ENCODE measurements at regions of chr6 and their contacts with region 1.

Region 1: GRCh38 chr6:77457720-77458349 is 5.5 kb downstream of the HTR1B start:
- DNase-seq: peak in 4 of 5 donors; percentile 59 to 71 (median 64)
- ATAC-seq: peak; percentile 61 to 91 (median 88)
- H3K4me3 ChIP-seq: no peak overlapping the region
- H3K27ac ChIP-seq: peak overlapping the region in 7 of 12 donors; percentile 7 to 68 (median 40)
- H3K4me1 ChIP-seq: peaks cover 0 to 5% (median 0%) of the 10 kb centered on the region in 12 donors
- H3K27me3 ChIP-seq: peaks cover 0 to 26% (median 12%) of the 10 kb centered on the region in 9 donors
- CTCF ChIP-seq: peak; percentile 54 to 84 (median 67)
- POLR2A ChIP-seq: no peak

Region 2: GRCh38 chr6:76682842-76683241 is 775.0 kb before region 1 on chr6:
- intact Hi-C with region 1: loop called in 9 of 10 experiments (anchors 5 to 10 kb)
- DNase-seq: no peak
- ATAC-seq: no peak
- H3K4me3 ChIP-seq: no peak overlapping the region
- H3K27ac ChIP-seq: no peak overlapping the region
- H3K4me1 ChIP-seq: no peaks in the 10 kb centered on the region
- H3K27me3 ChIP-seq: no peaks in the 10 kb centered on the region
- CTCF ChIP-seq: peak in 11 of 12 donors; percentile 23 to 54 (median 41)
- POLR2A ChIP-seq: no peak

Region 3: GRCh38 chr6:76774781-76775384 is 683.0 kb before region 1 on chr6:
- intact Hi-C with region 1: loop called in 1 of 10 experiments (anchors 10 kb)
- DNase-seq: peak in 3 of 5 donors; percentile 19 to 42 (median 20)
- ATAC-seq: peak; percentile 39 to 86 (median 64)
- H3K4me3 ChIP-seq: peak overlapping the region in 3 of 12 donors; percentile 16 to 31 (median 31)
- H3K27ac ChIP-seq: no peak overlapping the region
- H3K4me1 ChIP-seq: peaks cover 0 to 24% (median 0%) of the 10 kb centered on the region in 12 donors
- H3K27me3 ChIP-seq: no peaks in the 10 kb centered on the region
- CTCF ChIP-seq: no peak
- POLR2A ChIP-seq: no peak

Region 4: DNA sequence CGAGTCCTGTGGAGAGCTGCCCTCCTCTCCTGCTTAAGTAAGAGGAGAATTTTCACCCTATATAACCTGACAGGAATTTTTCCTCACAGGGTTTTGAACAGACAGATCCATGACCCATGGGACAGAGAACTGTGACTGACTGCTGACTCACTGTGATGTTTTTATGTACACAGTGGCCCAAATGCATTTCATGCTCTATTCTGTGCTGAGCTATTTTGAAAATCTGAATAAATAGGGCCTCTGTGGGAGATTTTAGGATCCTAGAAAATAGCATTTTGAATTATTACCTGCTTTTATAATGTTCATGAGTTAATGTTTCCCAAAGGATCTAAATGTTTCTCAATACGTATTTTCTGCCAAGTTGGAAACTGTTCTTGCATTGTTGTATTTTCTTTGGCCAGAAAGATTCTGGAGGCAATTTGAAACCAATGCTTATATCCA is 572.0 kb before region 1 on chr6:
- intact Hi-C with region 1: loop called in 1 of 10 experiments (anchors 10 kb)
- DNase-seq: no peak
- ATAC-seq: peak in 1 of 4 donors; percentile 29
- H3K4me3 ChIP-seq: no peak overlapping the region
- H3K27ac ChIP-seq: no peak overlapping the region
- H3K4me1 ChIP-seq: no peaks in the 10 kb centered on the region
- H3K27me3 ChIP-seq: no peaks in the 10 kb centered on the region
- CTCF ChIP-seq: no peak
- POLR2A ChIP-seq: no peak

Region 5: DNA sequence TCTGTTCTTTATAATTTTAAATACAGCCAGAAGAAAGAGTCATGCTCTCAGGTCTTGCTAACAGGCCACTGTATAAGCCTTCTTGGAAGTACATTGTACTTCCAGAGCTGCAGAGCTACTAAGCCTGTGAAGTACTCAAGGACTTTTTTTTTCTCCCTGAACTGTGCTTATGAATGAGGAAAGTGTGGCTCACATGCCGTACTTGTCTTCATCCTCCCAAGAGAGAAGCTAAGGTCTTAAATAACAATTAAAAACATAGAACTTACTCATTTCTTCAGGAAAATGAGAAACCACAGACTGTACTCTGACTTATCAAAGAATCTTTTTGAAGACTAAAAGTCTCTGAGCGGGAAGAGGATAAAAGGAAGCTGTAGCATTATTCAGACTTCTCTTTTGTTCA is 212.8 kb before region 1 on chr6:
- intact Hi-C with region 1: loop called in 1 of 10 experiments (anchors 10 kb)
- DNase-seq: no peak
- ATAC-seq: no peak
- H3K4me3 ChIP-seq: no peak overlapping the region
- H3K27ac ChIP-seq: no peak overlapping the region
- H3K4me1 ChIP-seq: peaks cover 0 to 3% (median 0%) of the 10 kb centered on the region in 12 donors
- H3K27me3 ChIP-seq: no peaks in the 10 kb centered on the region
- CTCF ChIP-seq: no peak
- POLR2A ChIP-seq: no peak

Region 6: DNA sequence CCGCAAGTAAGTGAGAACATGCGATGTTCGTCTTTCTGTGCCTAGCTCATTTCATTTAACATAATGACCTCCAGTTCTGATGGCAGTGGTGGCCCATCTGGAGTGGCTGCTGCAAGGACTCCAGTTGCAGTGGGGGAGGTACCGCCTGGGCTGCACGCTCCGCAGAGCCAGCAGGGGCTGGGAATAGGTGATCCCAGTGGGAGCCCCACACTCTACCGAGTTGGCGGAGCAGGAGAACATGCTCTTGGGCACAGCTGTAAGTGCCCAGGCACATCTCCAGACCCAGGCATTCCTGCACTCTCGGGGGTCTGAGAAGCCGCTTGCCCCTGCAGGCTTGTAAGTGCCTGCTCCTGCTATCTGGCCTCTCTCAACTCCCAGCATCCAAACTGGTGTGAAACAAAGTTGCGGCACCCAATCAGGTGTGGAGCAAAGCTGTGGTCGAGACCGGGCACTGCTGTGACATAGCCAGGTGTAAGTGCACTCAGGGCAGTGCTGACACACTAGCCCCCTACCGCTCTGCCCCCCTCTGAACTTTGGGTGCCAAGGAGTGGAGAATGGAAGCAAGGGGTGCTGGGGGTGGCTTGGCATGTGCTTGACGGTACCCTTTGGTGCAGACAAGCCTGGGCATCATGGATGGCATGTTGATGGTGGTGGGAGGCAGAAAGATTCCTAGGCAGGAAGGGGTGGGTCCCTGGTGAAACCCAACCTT is 124.8 kb before region 1 on chr6:
- intact Hi-C with region 1: loop called in 1 of 10 experiments (anchors 10 kb)
- DNase-seq: no peak
- ATAC-seq: no peak
- H3K4me3 ChIP-seq: no peak overlapping the region
- H3K27ac ChIP-seq: no peak overlapping the region
- H3K4me1 ChIP-seq: no peaks in the 10 kb centered on the region
- H3K27me3 ChIP-seq: no peaks in the 10 kb centered on the region
- CTCF ChIP-seq: no peak
- POLR2A ChIP-seq: no peak

Region 7: GRCh38 chr6:77341058-77341986 is 116.5 kb before region 1 on chr6:
- intact Hi-C with region 1: loop called in 2 of 10 experiments (anchors 10 kb)
- DNase-seq: peak; percentile 44 to 82 (median 71)
- ATAC-seq: peak; percentile 96 to 97 (median 97)
- H3K4me3 ChIP-seq: no peak overlapping the region
- H3K27ac ChIP-seq: peak overlapping the region; percentile 31 to 91 (median 80)
- H3K4me1 ChIP-seq: peaks cover 0 to 21% (median 14%) of the 10 kb centered on the region in 12 donors
- H3K27me3 ChIP-seq: no peaks in the 10 kb centered on the region
- CTCF ChIP-seq: no peak
- POLR2A ChIP-seq: no peak